IMR-90 (cell line): ENCODE measurements at regions of chr12 and their contacts with region 1.

Region 1: GRCh38 chr12:17928708-17929366 is 161.2 kb downstream of the RERGL start:
- DNase-seq: peak; percentile 13
- ATAC-seq: no peak
- H3K4me3 ChIP-seq: no peak overlapping the region
- H3K27ac ChIP-seq: no peak overlapping the region
- H3K4me1 ChIP-seq: no peaks in the 10 kb centered on the region
- H3K27me3 ChIP-seq: no peaks in the 10 kb centered on the region
- CTCF ChIP-seq: no peak
- POLR2A ChIP-seq: no peak
- RAD21 ChIP-seq: no peak

Region 2: DNA sequence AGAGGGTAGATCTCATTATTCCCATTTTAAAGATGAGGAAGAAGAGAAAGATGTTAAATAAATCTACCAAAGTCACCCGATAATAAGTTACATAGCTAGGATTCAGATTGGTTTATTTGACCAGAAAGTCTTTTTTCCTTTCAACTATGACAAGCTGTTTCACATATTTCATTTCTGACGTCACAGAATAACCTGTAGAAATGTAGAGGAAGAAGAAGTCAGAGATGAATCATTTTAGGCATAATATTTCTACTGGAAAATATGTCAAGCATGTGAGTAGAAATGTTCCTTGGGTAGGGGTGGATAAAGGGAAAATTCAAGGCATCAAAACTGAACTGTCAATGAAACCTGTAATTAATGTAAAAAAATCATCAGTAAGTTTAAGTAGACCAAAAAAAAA is 1474.4 kb before region 1 on chr12:
- CTCF ChIA-PET with region 1: no interaction called
- POLR2A ChIA-PET with region 1: no interaction called
- dilution Hi-C with region 1: no loop called
- in situ Hi-C with region 1: no loop called
- intact Hi-C with region 1: loop called (anchors 10 kb)
- DNase-seq: peak; percentile 51
- ATAC-seq: no peak
- H3K4me3 ChIP-seq: no peak overlapping the region
- H3K27ac ChIP-seq: no peak overlapping the region
- H3K4me1 ChIP-seq: no peaks in the 10 kb centered on the region
- H3K27me3 ChIP-seq: no peaks in the 10 kb centered on the region
- CTCF ChIP-seq: no peak
- POLR2A ChIP-seq: no peak
- RAD21 ChIP-seq: no peak